ENCODE measurements at regions of chr21 and their contacts with region 1.

Region 1: GRCh38 chr21:22416555-22416954 is 1418.3 kb downstream of the NCAM2 start:
- DNase-seq: no peak
- H3K4me3 ChIP-seq: no peak overlapping the region
- H3K27ac ChIP-seq: no peak overlapping the region
- H3K4me1 ChIP-seq: no peaks in the 10 kb centered on the region
- H3K27me3 ChIP-seq: no peaks in the 10 kb centered on the region
- CTCF ChIP-seq: no peak

Region 2: GRCh38 chr21:22174746-22175145 is 241.8 kb before region 1 on chr21:
- CTCF ChIA-PET with region 1: no interaction called
- POLR2A ChIA-PET with region 1: no interaction called
- intact Hi-C with region 1: no loop called
- DNase-seq: no peak
- H3K4me3 ChIP-seq: no peak overlapping the region
- H3K27ac ChIP-seq: no peak overlapping the region
- H3K4me1 ChIP-seq: no peaks in the 10 kb centered on the region
- H3K27me3 ChIP-seq: no peaks in the 10 kb centered on the region
- CTCF ChIP-seq: no peak

Region 3: DNA sequence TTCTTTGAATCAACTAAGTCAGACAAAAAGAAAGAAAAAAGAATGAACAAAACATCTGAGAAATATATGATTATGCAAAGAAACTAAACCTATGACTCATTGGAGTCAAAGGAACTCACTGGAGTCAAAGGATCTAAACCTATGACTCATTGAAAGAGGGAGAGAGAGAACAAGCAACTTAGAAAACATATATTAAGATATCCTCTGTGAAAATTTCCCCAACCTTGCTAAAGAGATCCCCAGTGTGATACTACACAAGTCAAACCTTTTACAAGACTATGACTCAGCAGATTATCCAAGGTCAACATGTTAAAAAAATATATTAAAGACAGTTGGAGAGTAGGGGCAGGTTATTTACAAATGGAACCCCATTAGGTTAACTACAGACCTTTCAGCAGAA is 120.0 kb after region 1 on chr21:
- CTCF ChIA-PET with region 1: no interaction called
- POLR2A ChIA-PET with region 1: no interaction called
- intact Hi-C with region 1: no loop called
- DNase-seq: peak; percentile 68
- H3K4me3 ChIP-seq: no peak overlapping the region
- H3K27ac ChIP-seq: no peak overlapping the region
- H3K4me1 ChIP-seq: no peaks in the 10 kb centered on the region
- H3K27me3 ChIP-seq: no peaks in the 10 kb centered on the region
- CTCF ChIP-seq: no peak

Region 4: DNA sequence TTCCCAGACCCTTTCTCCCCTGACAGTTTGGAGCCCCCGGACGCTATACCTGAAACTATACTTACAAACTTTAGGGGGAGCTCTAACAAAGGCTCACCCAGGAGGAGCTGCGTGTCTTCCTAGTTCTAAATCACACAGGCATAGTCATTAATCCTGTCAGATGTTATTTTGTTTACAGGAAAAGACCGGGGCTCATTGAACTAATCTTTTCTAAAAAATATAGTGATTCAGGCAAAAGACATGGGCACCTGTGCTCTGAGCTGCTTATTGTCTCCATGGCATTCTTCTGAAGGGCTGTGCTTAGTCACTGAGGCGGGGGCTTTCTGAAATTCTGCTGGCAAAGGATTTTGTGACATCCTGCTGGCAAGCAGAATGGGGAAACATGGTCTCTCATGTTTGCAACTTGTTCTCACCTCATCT is 158.6 kb after region 1 on chr21:
- CTCF ChIA-PET with region 1: no interaction called
- POLR2A ChIA-PET with region 1: no interaction called
- intact Hi-C with region 1: loop called (anchors 10 kb)
- DNase-seq: peak; percentile 84
- H3K4me3 ChIP-seq: peak overlapping the region; percentile 30
- H3K27ac ChIP-seq: peak overlapping the region; percentile 53
- H3K4me1 ChIP-seq: peaks cover 12% of the 10 kb centered on the region
- H3K27me3 ChIP-seq: no peaks in the 10 kb centered on the region
- CTCF ChIP-seq: peak; percentile 79

Region 5: GRCh38 chr21:23131171-23131570 is 714.6 kb after region 1 on chr21:
- CTCF ChIA-PET with region 1: no interaction called
- POLR2A ChIA-PET with region 1: no interaction called
- intact Hi-C with region 1: no loop called
- DNase-seq: no peak
- H3K4me3 ChIP-seq: no peak overlapping the region
- H3K27ac ChIP-seq: no peak overlapping the region
- H3K4me1 ChIP-seq: no peaks in the 10 kb centered on the region
- H3K27me3 ChIP-seq: no peaks in the 10 kb centered on the region
- CTCF ChIP-seq: no peak